ENCODE measurements at regions of chr7 and their contacts with region 1.

Region 1: GRCh38 chr7:95092324-95092723 is 184.9 kb downstream of the PPP1R9A start:
- DNase-seq: no peak
- H3K4me3 ChIP-seq: no peak overlapping the region
- H3K27ac ChIP-seq: no peak overlapping the region
- H3K4me1 ChIP-seq: no peaks in the 10 kb centered on the region
- H3K27me3 ChIP-seq: no peaks in the 10 kb centered on the region
- CTCF ChIP-seq: no peak
- POLR2A ChIP-seq: no peak

Region 2: DNA sequence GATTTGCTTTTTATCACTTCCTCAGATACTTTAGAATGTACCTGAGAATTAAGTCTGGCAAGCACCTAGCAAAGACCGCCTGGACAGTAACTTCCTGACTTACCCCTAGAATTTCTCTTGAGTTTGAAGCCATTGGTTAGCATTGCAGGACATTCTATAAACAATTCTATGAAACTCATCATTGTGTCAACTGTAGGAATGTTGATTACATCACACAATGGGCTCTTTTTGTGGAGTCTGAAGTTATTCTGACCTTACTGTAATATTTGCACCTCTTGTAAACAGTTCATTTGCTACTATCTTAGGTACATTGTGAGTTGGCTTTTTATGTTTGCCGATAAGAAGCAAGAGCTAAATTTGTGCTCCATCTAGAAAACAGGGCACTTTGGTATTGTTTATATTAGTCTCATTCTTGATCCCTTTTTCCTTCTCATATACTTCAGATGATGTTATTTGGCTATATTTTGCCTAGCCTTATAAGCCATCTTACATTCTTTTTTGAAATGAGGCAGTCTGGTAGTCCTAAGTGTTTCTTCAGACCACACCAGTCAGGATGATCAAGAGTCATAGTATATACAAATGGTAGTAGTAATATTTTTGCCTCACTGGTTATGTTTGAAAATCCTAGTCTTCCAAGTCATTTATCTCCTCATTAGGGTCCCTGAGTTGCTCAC is 530.3 kb before region 1 on chr7:
- intact Hi-C with region 1: loop called (anchors 10 kb)
- DNase-seq: no peak
- H3K4me3 ChIP-seq: no peak overlapping the region
- H3K27ac ChIP-seq: no peak overlapping the region
- H3K4me1 ChIP-seq: no peaks in the 10 kb centered on the region
- H3K27me3 ChIP-seq: no peaks in the 10 kb centered on the region
- CTCF ChIP-seq: no peak
- POLR2A ChIP-seq: no peak

Region 3: DNA sequence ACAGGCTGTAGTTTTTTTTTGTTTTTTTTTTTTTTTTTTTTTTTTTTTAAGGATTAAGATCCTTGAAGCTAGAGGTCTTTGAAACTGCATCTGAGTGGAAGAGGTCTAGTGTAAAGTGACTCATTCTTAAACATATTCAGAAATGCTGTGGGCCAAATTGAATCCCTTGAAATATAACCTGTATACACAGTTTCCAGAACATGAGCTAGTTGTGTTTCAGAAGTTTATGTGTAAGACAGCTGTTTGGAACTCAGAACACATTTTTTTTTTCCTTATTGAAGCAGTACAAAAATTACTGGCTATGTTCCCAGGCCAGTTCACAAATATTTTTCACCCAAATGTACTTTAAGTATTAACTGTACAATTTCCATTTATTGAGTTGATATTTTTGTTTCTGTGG is 117.0 kb before region 1 on chr7:
- intact Hi-C with region 1: no loop called
- DNase-seq: no peak
- H3K4me3 ChIP-seq: no peak overlapping the region
- H3K27ac ChIP-seq: no peak overlapping the region
- H3K4me1 ChIP-seq: no peaks in the 10 kb centered on the region
- H3K27me3 ChIP-seq: no peaks in the 10 kb centered on the region
- CTCF ChIP-seq: no peak
- POLR2A ChIP-seq: no peak

Region 4: GRCh38 chr7:95028683-95029082 is 63.6 kb before region 1 on chr7:
- intact Hi-C with region 1: no loop called
- DNase-seq: no peak
- H3K4me3 ChIP-seq: no peak overlapping the region
- H3K27ac ChIP-seq: no peak overlapping the region
- H3K4me1 ChIP-seq: no peaks in the 10 kb centered on the region
- H3K27me3 ChIP-seq: no peaks in the 10 kb centered on the region
- CTCF ChIP-seq: no peak
- POLR2A ChIP-seq: no peak

Region 5: GRCh38 chr7:95330204-95330960 is 238.1 kb after region 1 on chr7:
- intact Hi-C with region 1: loop called (anchors 5 kb)
- DNase-seq: no peak
- H3K4me3 ChIP-seq: peak overlapping the region; percentile 13 to 41 (median 37)
- H3K27ac ChIP-seq: no peak overlapping the region
- H3K4me1 ChIP-seq: no peaks in the 10 kb centered on the region
- H3K27me3 ChIP-seq: no peaks in the 10 kb centered on the region
- CTCF ChIP-seq: no peak
- POLR2A ChIP-seq: no peak

Measured in breast epithelium (tissue), 4 donors.